HEK293 (cell line): ENCODE measurements at regions of chr14 and their contacts with region 1.

Region 1: GRCh38 chr14:94080471-94081289 is at the start of gene DDX24:
- H3K4me3 ChIP-seq: peak within 1 kb of the TSS; percentile 91
- H3K27ac ChIP-seq: peak within 1 kb of the TSS; percentile 82; the same call in 1 of the 2 replicates
- H3K4me1 ChIP-seq: peaks cover 4% of the 10 kb centered on the region; the same call in 1 of the 2 replicates
- CTCF ChIP-seq: no peak; the same call in 1 of the 2 replicates

Region 2: GRCh38 chr14:94026173-94026888 is 54.3 kb before region 1 on chr14 and contains the start of gene OTUB2:
- CTCF ChIA-PET with region 1: no interaction called
- POLR2A ChIA-PET with region 1: no interaction called
- H3K4me3 ChIP-seq: peak within 1 kb of the TSS; percentile 63
- H3K27ac ChIP-seq: no peak within 1 kb of the TSS
- H3K4me1 ChIP-seq: no peaks in the 10 kb centered on the region
- CTCF ChIP-seq: no peak

Region 3: DNA sequence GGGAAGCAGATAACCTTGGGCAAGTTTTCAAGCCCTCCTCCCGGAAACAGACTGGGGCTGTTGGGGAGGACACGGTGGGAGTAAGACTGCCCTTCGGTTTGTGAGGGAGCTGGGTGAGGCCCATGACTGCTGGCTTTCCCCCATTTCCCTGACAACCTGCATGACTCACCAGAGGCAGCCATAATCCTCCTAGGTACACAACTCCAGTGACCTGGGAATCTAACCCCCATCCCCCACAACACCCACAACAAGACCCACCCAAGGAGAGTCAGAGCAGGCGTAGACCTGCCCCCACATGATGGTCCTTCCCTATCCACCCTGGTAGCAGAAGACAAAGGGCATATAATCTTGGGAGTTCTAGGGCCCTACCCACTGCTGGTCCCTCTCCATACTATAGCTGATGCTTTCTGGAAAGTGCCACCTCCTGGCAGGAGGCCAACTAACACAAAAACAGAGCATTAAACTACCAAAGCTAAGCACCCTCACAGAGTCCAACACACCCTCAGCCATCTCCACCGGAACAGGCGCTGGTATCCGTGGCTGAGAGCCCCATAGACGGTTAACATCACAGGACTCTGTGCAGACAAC is 14.5 kb before region 1 on chr14:
- CTCF ChIA-PET with region 1: no interaction called
- POLR2A ChIA-PET with region 1: interaction called, 25 read pairs
- H3K4me3 ChIP-seq: no peak overlapping the region
- H3K27ac ChIP-seq: peak overlapping the region; percentile 21
- H3K4me1 ChIP-seq: peaks cover 9% of the 10 kb centered on the region; the same call in 1 of the 2 replicates
- CTCF ChIP-seq: no peak